Dorsolateral prefrontal cortex (tissue), 120 donors: ENCODE measurements at regions of chr1 and their contacts with region 1.

Region 1: GRCh38 chr1:184386312-184387068 is at the start of gene C1orf21:
- DNase-seq: peak; percentile 54 to 92 (median 86)
- H3K4me3 ChIP-seq: peak within 1 kb of the TSS; percentile 51 to 86 (median 76)
- H3K27ac ChIP-seq: peak within 1 kb of the TSS in 58 of 59 donors; percentile 12 to 94 (median 82)
- H3K27me3 ChIP-seq: no peaks in the 10 kb centered on the region
- CTCF ChIP-seq: peak in 1 of 56 donors; percentile 6
- total RNA-seq, gene C1orf21: 22.5 to 94.0 (median 64.7) TPM

Region 2: DNA sequence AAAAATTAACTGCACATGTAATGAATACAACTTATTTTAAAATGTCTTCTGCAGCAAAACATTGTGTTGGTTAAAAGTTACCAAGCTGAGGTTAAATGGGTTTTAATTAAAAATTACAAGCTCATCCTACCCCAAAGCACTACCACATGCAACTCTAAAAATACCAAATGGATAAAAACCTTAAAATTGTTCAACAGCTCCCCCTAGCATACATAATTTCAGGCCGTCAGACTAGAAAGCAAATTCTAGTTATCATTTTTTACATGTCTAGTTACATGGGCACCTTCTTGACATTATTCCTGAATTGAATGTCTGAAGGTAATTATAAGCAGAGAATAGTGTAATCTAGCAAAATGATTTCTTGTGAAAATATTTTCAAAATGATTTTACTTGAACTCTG is 176.8 kb after region 1 on chr1:
- intact Hi-C with region 1: loop called in 1 of 2 experiments (anchors 10 kb)
- DNase-seq: no peak
- H3K4me3 ChIP-seq: no peak overlapping the region
- H3K27ac ChIP-seq: peak overlapping the region in 2 of 59 donors; percentile 1 to 12
- H3K27me3 ChIP-seq: no peaks in the 10 kb centered on the region
- CTCF ChIP-seq: peak; percentile 34 to 75 (median 56)

Region 3: GRCh38 chr1:184649451-184649888 is 263.0 kb after region 1 on chr1:
- intact Hi-C with region 1: no loop called
- DNase-seq: no peak
- H3K4me3 ChIP-seq: peak overlapping the region in 3 of 59 donors; percentile 10 to 20 (median 14)
- H3K27ac ChIP-seq: peak overlapping the region in 43 of 59 donors; percentile 3 to 78 (median 52)
- H3K27me3 ChIP-seq: no peaks in the 10 kb centered on the region
- CTCF ChIP-seq: no peak